ENCODE measurements at regions of chr11 and their contacts with region 1.

Region 1: DNA sequence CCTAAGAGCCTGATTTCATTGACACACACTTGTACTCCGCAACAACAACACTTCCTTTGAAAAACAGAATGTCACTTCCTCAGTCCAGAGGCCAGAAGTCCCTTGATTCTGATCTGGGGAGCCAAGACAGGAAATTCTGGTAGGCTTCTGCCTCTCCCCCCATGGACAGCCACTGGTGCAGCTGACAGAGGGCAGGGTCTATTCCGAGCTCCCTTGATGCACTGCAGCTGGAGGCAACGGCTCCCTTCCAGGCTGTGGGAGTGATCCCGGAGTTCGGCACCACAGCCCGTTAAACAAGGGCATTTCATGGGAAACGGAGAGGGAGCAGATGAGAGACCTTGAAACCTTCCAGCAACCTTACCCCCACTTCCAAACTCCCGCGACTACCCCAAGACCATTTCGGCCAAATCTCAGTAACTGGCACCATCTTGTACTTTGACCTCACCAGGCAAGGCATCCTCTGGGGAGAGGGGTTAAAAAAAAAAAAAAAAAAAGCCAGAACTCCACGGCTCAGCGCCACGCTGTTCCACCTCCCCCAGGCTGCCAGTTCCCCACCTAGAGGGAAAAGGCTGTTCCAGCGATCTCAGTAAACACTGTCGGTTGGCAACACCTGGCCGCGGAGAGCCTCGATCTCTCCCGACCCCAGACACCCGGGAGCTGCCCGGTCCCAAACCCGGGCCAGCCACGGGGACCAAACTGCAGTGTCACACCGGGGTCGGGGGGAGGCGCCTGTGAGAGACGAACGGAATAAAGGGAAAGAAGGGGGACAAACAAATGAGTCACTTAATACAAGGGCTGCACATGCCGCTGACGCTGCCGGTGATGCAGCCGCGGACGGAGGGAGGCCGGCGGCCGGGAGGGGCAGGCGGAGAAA is 1.1 kb downstream of the GAB2 start:
- DNase-seq: peak; percentile 62 to 85 (median 68)
- H3K4me3 ChIP-seq: peak overlapping the region; percentile 34 to 50
- H3K4me3 Mint-ChIP-seq: peak overlapping the region; percentile 85 to 93 (median 90)
- H3K27ac ChIP-seq: peak overlapping the region; percentile 29
- H3K27ac Mint-ChIP-seq: peak overlapping the region; percentile 82 to 92 (median 89)
- H3K4me1 ChIP-seq: peaks cover 23% of the 10 kb centered on the region
- H3K4me1 Mint-ChIP-seq: peaks cover 15 to 34% (median 22%) of the 10 kb centered on the region in 4 donors
- H3K27me3 ChIP-seq: no peaks in the 10 kb centered on the region
- H3K27me3 Mint-ChIP-seq: peaks cover 5% of the 10 kb centered on the region in 2 donors

Region 2: DNA sequence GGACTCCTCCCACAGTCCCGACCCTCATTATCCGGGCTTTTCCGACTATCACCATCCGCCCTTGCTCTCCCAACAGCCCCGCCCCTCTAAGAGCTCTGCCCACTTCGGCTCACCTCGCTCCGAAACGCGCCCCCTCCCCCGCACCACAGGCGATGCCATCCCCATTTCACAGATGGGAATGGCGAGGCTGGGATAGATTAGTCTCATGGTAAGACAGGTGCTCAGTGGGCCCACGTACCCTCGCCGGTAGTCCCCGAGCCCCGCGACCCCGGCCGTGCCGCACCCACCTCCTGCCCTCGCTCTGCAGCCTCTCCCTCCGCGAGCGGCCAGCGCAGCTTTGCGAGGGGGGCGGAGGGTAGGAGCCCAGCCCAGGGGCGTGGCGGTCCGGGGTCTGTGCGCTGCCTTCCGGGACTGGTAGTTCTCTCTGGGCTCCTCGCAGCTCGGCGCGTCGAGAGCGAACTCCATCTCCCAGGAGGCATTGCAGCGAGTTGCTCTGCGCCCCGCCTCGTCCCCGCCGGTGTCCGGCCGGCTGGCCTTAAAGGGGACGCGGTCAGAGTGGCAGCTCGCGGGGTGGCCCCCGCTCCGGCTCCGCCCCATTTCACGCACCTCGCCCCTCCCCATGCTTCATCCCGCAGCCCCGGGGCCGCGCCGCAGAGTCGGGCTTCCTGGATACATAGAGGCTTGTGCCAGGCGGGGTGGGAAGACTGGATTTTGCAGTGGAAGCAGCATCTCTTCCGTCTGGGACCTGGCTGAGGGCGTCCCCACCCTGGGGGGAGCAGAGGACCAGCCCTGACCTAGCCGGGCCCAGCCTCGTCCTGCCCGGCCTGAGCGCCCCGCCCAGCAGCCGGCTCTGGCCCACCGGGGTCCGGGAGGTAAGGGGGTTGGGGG is 228.0 kb before region 1 on chr11 and contains the starts of genes KCTD21 and USP35:
- CTCF ChIA-PET with region 1: no interaction called
- POLR2A ChIA-PET with region 1: interaction called, 5 read pairs
- intact Hi-C with region 1: loop called (anchors 2 kb)
- DNase-seq: peak; percentile 85 to 92 (median 87)
- H3K4me3 ChIP-seq: peak within 1 kb of the TSS; percentile 88 to 90
- H3K4me3 Mint-ChIP-seq: peak within 1 kb of the TSS; percentile 98 to 99 (median 99)
- H3K27ac ChIP-seq: peak within 1 kb of the TSS; percentile 85
- H3K27ac Mint-ChIP-seq: peak within 1 kb of the TSS; percentile 95 to 99 (median 98)
- H3K4me1 ChIP-seq: peaks cover 39% of the 10 kb centered on the region
- H3K4me1 Mint-ChIP-seq: peaks cover 33 to 63% (median 47%) of the 10 kb centered on the region in 4 donors
- H3K27me3 ChIP-seq: no peaks in the 10 kb centered on the region
- H3K27me3 Mint-ChIP-seq: no peaks in the 10 kb centered on the region
- total RNA-seq, gene KCTD21: 8.0 to 8.6 TPM
- total RNA-seq, gene USP35: 12.4 to 14.3 TPM

Region 3: GRCh38 chr11:78432058-78432515 is 15.5 kb after region 1 on chr11:
- CTCF ChIA-PET with region 1: interaction called, 44 read pairs
- POLR2A ChIA-PET with region 1: interaction called, 4 read pairs
- intact Hi-C with region 1: no loop called
- DNase-seq: no peak
- H3K4me3 ChIP-seq: no peak overlapping the region
- H3K4me3 Mint-ChIP-seq: no peak overlapping the region
- H3K27ac ChIP-seq: no peak overlapping the region
- H3K27ac Mint-ChIP-seq: no peak overlapping the region
- H3K4me1 ChIP-seq: no peaks in the 10 kb centered on the region
- H3K4me1 Mint-ChIP-seq: peaks cover 0 to 5% (median 4%) of the 10 kb centered on the region in 4 donors
- H3K27me3 ChIP-seq: no peaks in the 10 kb centered on the region
- H3K27me3 Mint-ChIP-seq: no peaks in the 10 kb centered on the region

Region 4: GRCh38 chr11:78564490-78565467 is 148.2 kb after region 1 on chr11:
- CTCF ChIA-PET with region 1: interaction called, 121 read pairs
- POLR2A ChIA-PET with region 1: interaction called, 27 read pairs
- intact Hi-C with region 1: loop called (anchors 1 kb)
- DNase-seq: peak; percentile 59 to 68 (median 63)
- H3K4me3 ChIP-seq: no peak overlapping the region
- H3K4me3 Mint-ChIP-seq: peak overlapping the region in 1 of 8 donors; percentile 48
- H3K27ac ChIP-seq: no peak overlapping the region
- H3K27ac Mint-ChIP-seq: peak overlapping the region in 5 of 7 donors; percentile 36 to 83 (median 74)
- H3K4me1 ChIP-seq: peaks cover 32% of the 10 kb centered on the region
- H3K4me1 Mint-ChIP-seq: peaks cover 16 to 45% (median 27%) of the 10 kb centered on the region in 4 donors
- H3K27me3 ChIP-seq: no peaks in the 10 kb centered on the region
- H3K27me3 Mint-ChIP-seq: no peaks in the 10 kb centered on the region

Measured in CD4-positive, alpha-beta memory T cell (primary cell).